ENCODE measurements at regions of chr10 and their contacts with region 1.

Region 1: GRCh38 chr10:7410862-7411670 is at the start of gene SFMBT2:
- DNase-seq: peak; percentile 59 to 67 (median 64)
- H3K4me3 ChIP-seq: peak within 1 kb of the TSS; percentile 83 to 84
- H3K4me3 Mint-ChIP-seq: peak within 1 kb of the TSS; percentile 94 to 100 (median 96)
- H3K27ac ChIP-seq: peak within 1 kb of the TSS; percentile 42
- H3K27ac Mint-ChIP-seq: peak within 1 kb of the TSS; percentile 77 to 95 (median 90)
- H3K4me1 ChIP-seq: peaks cover 37% of the 10 kb centered on the region
- H3K4me1 Mint-ChIP-seq: peaks cover 4 to 61% (median 37%) of the 10 kb centered on the region in 4 donors
- H3K27me3 ChIP-seq: no peaks in the 10 kb centered on the region
- H3K27me3 Mint-ChIP-seq: no peaks in the 10 kb centered on the region
- total RNA-seq, gene SFMBT2: 20.0 to 22.3 TPM

Region 2: GRCh38 chr10:6416892-6417512 is 994.1 kb before region 1 on chr10:
- CTCF ChIA-PET with region 1: no interaction called
- POLR2A ChIA-PET with region 1: no interaction called
- intact Hi-C with region 1: loop called (anchors 10 kb)
- DNase-seq: peak in 4 of 5 donors; percentile 52 to 57 (median 56)
- H3K4me3 ChIP-seq: no peak overlapping the region
- H3K4me3 Mint-ChIP-seq: no peak overlapping the region
- H3K27ac ChIP-seq: no peak overlapping the region
- H3K27ac Mint-ChIP-seq: no peak overlapping the region
- H3K4me1 ChIP-seq: no peaks in the 10 kb centered on the region
- H3K4me1 Mint-ChIP-seq: peaks cover 0 to 6% (median 2%) of the 10 kb centered on the region in 4 donors
- H3K27me3 ChIP-seq: no peaks in the 10 kb centered on the region
- H3K27me3 Mint-ChIP-seq: no peaks in the 10 kb centered on the region

Region 3: DNA sequence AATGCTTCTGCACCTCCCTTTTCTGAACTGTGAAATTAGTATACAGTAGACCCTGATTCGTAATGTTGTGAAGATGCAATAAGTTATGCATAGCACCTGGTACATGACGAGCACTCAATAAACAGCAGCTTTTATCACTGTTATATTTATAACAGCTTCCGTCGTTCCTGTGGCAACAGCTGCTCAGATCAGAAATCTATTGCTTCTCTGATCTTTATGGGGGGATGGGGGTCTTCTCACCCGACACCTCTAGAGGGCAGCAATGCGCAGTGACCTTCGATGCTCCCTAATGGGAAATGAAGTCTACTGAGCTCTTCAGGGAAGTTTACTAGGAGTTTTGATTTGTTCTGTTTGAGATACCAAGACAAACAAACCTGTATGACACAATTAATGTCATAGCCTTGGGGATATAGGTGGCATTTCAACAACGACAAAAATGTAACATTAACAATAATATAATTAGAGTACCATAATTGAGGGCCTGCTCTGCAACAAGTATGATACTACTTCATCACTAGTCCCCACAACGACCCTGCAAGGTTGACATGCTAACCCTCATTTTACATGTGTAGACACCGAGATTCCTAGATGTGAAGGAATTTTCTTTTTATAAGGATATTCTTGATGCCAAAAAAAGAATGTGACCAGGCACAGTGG is 289.8 kb before region 1 on chr10:
- CTCF ChIA-PET with region 1: interaction called, 23 read pairs
- POLR2A ChIA-PET with region 1: interaction called, 8 read pairs
- intact Hi-C with region 1: loop called (anchors 2 kb)
- DNase-seq: peak; percentile 48 to 65 (median 59)
- H3K4me3 ChIP-seq: no peak overlapping the region
- H3K4me3 Mint-ChIP-seq: no peak overlapping the region
- H3K27ac ChIP-seq: no peak overlapping the region
- H3K27ac Mint-ChIP-seq: peak overlapping the region in 5 of 7 donors; percentile 32 to 74 (median 71)
- H3K4me1 ChIP-seq: peaks cover 6% of the 10 kb centered on the region
- H3K4me1 Mint-ChIP-seq: peaks cover 4 to 7% (median 5%) of the 10 kb centered on the region in 4 donors
- H3K27me3 ChIP-seq: no peaks in the 10 kb centered on the region
- H3K27me3 Mint-ChIP-seq: peaks cover 0 to 5% of the 10 kb centered on the region in 2 donors

Region 4: GRCh38 chr10:7260412-7260900 is 150.6 kb before region 1 on chr10:
- CTCF ChIA-PET with region 1: interaction called, 11 read pairs
- POLR2A ChIA-PET with region 1: interaction called, 12 read pairs
- intact Hi-C with region 1: loop called (anchors 1 kb)
- DNase-seq: peak in 4 of 5 donors; percentile 41 to 48 (median 43)
- H3K4me3 ChIP-seq: no peak overlapping the region
- H3K4me3 Mint-ChIP-seq: peak overlapping the region in 4 of 8 donors; percentile 1 to 78 (median 42)
- H3K27ac ChIP-seq: no peak overlapping the region
- H3K27ac Mint-ChIP-seq: peak overlapping the region in 6 of 7 donors; percentile 62 to 97 (median 84)
- H3K4me1 ChIP-seq: peaks cover 38% of the 10 kb centered on the region
- H3K4me1 Mint-ChIP-seq: peaks cover 34 to 52% (median 47%) of the 10 kb centered on the region in 4 donors
- H3K27me3 ChIP-seq: no peaks in the 10 kb centered on the region
- H3K27me3 Mint-ChIP-seq: no peaks in the 10 kb centered on the region

Region 5: GRCh38 chr10:7388602-7389001 is 22.5 kb before region 1 on chr10:
- CTCF ChIA-PET with region 1: interaction called, 4 read pairs
- POLR2A ChIA-PET with region 1: interaction called, 6 read pairs
- intact Hi-C with region 1: loop called (anchors 2 kb)
- DNase-seq: peak; percentile 17 to 48 (median 25)
- H3K4me3 ChIP-seq: no peak overlapping the region
- H3K4me3 Mint-ChIP-seq: peak overlapping the region in 7 of 8 donors; percentile 62 to 94 (median 85)
- H3K27ac ChIP-seq: no peak overlapping the region
- H3K27ac Mint-ChIP-seq: peak overlapping the region; percentile 83 to 97 (median 93)
- H3K4me1 ChIP-seq: peaks cover 32% of the 10 kb centered on the region
- H3K4me1 Mint-ChIP-seq: peaks cover 37 to 61% (median 51%) of the 10 kb centered on the region in 4 donors
- H3K27me3 ChIP-seq: no peaks in the 10 kb centered on the region
- H3K27me3 Mint-ChIP-seq: no peaks in the 10 kb centered on the region

Region 6: GRCh38 chr10:7432884-7433726 is 22.0 kb after region 1 on chr10:
- CTCF ChIA-PET with region 1: no interaction called
- POLR2A ChIA-PET with region 1: no interaction called
- intact Hi-C with region 1: no loop called
- DNase-seq: no peak
- H3K4me3 ChIP-seq: no peak overlapping the region
- H3K4me3 Mint-ChIP-seq: no peak overlapping the region
- H3K27ac ChIP-seq: no peak overlapping the region
- H3K27ac Mint-ChIP-seq: no peak overlapping the region
- H3K4me1 ChIP-seq: no peaks in the 10 kb centered on the region
- H3K4me1 Mint-ChIP-seq: peaks cover 0 to 7% (median 1%) of the 10 kb centered on the region in 4 donors
- H3K27me3 ChIP-seq: no peaks in the 10 kb centered on the region
- H3K27me3 Mint-ChIP-seq: peaks cover 0 to 3% of the 10 kb centered on the region in 2 donors

Measured in CD4-positive, alpha-beta memory T cell (primary cell).